Colonic mucosa (tissue), 4 donors: ENCODE measurements at regions of chr7 and their contacts with region 1.

Region 1: GRCh38 chr7:74068393-74069085 is 15.1 kb upstream of the LIMK1 start:
- DNase-seq: no peak
- H3K4me3 ChIP-seq: no peak overlapping the region
- H3K27ac ChIP-seq: no peak overlapping the region
- H3K4me1 ChIP-seq: no peaks in the 10 kb centered on the region
- H3K27me3 ChIP-seq: no peaks in the 10 kb centered on the region
- CTCF ChIP-seq: no peak

Region 2: DNA sequence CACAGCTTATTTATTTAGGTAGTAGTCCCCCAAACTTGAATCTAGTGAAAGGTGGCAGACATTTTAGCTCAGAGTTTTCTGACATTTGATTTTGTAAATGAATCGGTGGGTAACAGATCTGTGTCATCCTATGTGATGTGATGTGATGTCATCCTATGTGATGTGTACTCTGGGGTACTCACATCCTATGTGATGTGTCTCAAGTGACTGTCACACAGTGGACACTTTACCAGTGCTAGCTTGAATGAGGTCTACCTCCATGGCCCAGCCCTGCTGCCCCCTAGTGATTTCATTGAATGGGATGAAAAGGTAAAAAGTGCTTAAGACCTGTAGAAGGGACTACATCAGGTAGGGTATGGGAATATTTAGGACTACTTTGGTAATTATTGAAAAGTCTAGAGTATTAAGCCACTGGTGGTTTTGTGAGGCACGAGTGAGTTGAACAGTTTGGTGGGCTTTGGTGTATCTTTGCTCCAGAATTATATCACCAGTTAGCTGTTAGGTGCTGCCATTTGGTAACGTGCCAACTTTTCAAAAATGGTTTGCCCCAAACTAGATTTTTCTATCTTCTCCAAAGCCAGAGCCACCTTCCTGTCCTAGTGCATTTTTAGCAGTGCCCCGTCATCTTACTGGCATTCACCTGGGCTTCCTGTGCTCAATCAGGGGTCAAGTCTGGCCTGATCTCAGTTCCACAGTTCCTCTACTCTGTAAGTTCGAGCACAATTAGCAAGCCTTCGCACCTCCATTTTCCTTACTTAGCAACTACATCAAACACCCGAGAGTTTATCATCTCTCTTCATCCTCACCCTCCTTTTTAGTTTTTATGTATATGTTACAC is 115.3 kb after region 1 on chr7:
- intact Hi-C with region 1: loop called (anchors 5 kb)
- DNase-seq: peak; percentile 40
- H3K4me3 ChIP-seq: no peak overlapping the region
- H3K27ac ChIP-seq: no peak overlapping the region
- H3K4me1 ChIP-seq: peaks cover 35% of the 10 kb centered on the region
- H3K27me3 ChIP-seq: no peaks in the 10 kb centered on the region
- CTCF ChIP-seq: peak; percentile 17

Region 3: DNA sequence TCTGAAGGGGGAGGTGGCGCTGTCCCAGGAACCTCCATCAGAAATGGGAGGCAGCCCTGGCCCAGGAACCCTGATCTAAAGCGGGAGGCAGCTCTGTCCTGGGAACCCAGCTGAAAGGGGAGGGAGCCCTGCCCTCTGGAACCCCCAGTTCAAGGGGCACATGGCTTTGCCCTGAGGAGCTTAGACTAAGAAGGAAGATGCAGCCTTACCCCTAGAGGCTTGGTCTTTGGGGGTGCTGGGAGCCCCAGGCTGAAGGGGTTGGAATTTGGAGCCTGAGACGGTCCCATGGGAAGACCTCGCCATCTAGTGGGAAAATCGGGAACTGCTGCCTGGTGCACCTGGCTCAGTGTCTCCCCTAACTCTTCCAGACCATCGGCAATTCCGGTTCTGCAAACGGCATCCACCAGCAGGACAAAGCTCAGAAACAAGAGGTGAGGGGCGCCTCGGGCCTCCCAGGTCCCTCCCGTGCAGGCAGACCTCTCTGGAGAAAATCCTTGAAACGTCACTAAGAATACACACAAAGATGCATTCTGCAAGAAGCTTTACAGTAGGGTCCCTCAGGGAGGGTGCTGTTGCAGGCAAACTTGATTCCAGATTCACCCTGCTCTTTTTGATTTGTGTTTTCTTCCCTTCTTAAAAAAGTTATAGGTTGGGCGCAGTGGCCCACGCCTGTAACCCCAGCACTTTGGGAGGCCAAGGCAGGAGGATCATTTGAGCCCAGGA is 332.8 kb after region 1 on chr7:
- intact Hi-C with region 1: loop called (anchors 5 kb)
- DNase-seq: peak; percentile 84
- H3K4me3 ChIP-seq: no peak overlapping the region
- H3K27ac ChIP-seq: no peak overlapping the region
- H3K4me1 ChIP-seq: no peaks in the 10 kb centered on the region
- H3K27me3 ChIP-seq: no peaks in the 10 kb centered on the region
- CTCF ChIP-seq: peak; percentile 96